Activated CD4-positive, alpha-beta memory T cell treated with anti-CD3 and anti-CD28 coated beads, Interleukin-2, amount 10 ng/mL, durations not matched to agents 7 days and 5 days (primary cell): ENCODE measurements at regions of chr13 and their contacts with region 1.

Region 1: DNA sequence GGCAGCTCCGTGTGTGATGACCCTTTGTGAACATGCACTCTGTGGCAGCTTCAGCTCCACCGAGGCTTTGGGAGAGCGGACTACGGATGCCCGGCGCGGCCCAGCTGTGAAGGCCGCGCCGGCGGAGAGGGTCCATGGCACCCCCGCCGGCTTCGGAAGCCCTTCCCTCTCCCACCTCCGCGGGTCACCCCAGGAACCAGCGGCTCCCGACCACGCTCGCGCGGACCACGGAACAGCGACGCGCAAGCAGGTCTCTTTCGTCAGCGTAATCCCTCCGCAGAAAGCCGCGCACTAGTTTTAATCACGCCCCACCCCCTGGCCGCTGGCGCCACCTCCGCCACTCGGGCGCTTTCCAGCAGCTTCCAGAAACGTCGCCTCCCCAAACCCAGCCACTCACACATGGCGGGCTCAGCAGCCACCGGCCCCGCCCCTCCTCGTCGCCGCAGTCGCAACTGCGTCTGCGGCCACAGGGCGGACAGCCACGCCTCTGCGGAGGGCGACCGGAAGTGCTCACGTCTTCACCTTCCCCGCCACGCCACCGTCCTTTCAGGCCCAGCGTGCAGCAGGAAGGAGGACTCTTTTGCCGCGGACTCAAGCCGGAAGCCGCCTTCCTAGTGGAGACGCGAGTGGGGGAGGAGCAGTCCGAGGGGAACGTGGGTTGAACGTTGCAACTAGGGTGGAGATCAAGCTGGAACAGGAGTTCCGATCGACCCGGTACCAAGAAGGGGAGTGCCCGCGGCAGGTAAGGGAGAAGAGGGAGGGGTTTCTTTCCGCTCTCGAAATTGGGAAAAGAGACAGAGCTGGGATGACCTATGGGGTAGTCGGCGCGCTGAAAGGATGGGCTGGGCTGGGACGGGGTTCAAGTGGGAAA is at the start of gene USPL1:
- DNase-seq: peak; percentile 99
- H3K4me3 Mint-ChIP-seq: no peak within 1 kb of the TSS
- H3K27ac Mint-ChIP-seq: no peak within 1 kb of the TSS
- H3K4me1 Mint-ChIP-seq: peaks cover 23% of the 10 kb centered on the region
- H3K27me3 Mint-ChIP-seq: no peaks in the 10 kb centered on the region
- total RNA-seq, gene USPL1: 19.7 to 21.8 TPM

Region 2: GRCh38 chr13:30017880-30018279 is 599.7 kb before region 1 on chr13:
- CTCF ChIA-PET with region 1: no interaction called
- POLR2A ChIA-PET with region 1: no interaction called
- DNase-seq: no peak
- H3K4me3 Mint-ChIP-seq: no peak overlapping the region
- H3K27ac Mint-ChIP-seq: no peak overlapping the region
- H3K4me1 Mint-ChIP-seq: no peaks in the 10 kb centered on the region
- H3K27me3 Mint-ChIP-seq: peaks cover 12% of the 10 kb centered on the region

Region 3: GRCh38 chr13:30142486-30143211 is 474.9 kb before region 1 on chr13:
- CTCF ChIA-PET with region 1: no interaction called
- POLR2A ChIA-PET with region 1: interaction called, 16 read pairs
- DNase-seq: peak; percentile 53
- H3K4me3 Mint-ChIP-seq: no peak overlapping the region
- H3K27ac Mint-ChIP-seq: peak overlapping the region; percentile 71
- H3K4me1 Mint-ChIP-seq: peaks cover 62% of the 10 kb centered on the region
- H3K27me3 Mint-ChIP-seq: no peaks in the 10 kb centered on the region

Region 4: GRCh38 chr13:30346153-30346788 is 271.3 kb before region 1 on chr13:
- CTCF ChIA-PET with region 1: no interaction called
- POLR2A ChIA-PET with region 1: interaction called, 10 read pairs
- DNase-seq: peak; percentile 91
- H3K4me3 Mint-ChIP-seq: peak overlapping the region; percentile 38
- H3K27ac Mint-ChIP-seq: peak overlapping the region; percentile 60
- H3K4me1 Mint-ChIP-seq: peaks cover 37% of the 10 kb centered on the region
- H3K27me3 Mint-ChIP-seq: no peaks in the 10 kb centered on the region

Region 5: GRCh38 chr13:30395192-30396084 is 222.1 kb before region 1 on chr13:
- CTCF ChIA-PET with region 1: no interaction called
- POLR2A ChIA-PET with region 1: interaction called, 24 read pairs
- DNase-seq: peak; percentile 84
- H3K4me3 Mint-ChIP-seq: peak overlapping the region; percentile 83
- H3K27ac Mint-ChIP-seq: peak overlapping the region; percentile 98
- H3K4me1 Mint-ChIP-seq: peaks cover 26% of the 10 kb centered on the region
- H3K27me3 Mint-ChIP-seq: no peaks in the 10 kb centered on the region

Region 6: GRCh38 chr13:30629527-30629926 is 12.0 kb after region 1 on chr13:
- CTCF ChIA-PET with region 1: interaction called, 4 read pairs
- POLR2A ChIA-PET with region 1: interaction called, 69 read pairs
- DNase-seq: no peak
- H3K4me3 Mint-ChIP-seq: no peak overlapping the region
- H3K27ac Mint-ChIP-seq: no peak overlapping the region
- H3K4me1 Mint-ChIP-seq: peaks cover 36% of the 10 kb centered on the region
- H3K27me3 Mint-ChIP-seq: no peaks in the 10 kb centered on the region

Region 7: DNA sequence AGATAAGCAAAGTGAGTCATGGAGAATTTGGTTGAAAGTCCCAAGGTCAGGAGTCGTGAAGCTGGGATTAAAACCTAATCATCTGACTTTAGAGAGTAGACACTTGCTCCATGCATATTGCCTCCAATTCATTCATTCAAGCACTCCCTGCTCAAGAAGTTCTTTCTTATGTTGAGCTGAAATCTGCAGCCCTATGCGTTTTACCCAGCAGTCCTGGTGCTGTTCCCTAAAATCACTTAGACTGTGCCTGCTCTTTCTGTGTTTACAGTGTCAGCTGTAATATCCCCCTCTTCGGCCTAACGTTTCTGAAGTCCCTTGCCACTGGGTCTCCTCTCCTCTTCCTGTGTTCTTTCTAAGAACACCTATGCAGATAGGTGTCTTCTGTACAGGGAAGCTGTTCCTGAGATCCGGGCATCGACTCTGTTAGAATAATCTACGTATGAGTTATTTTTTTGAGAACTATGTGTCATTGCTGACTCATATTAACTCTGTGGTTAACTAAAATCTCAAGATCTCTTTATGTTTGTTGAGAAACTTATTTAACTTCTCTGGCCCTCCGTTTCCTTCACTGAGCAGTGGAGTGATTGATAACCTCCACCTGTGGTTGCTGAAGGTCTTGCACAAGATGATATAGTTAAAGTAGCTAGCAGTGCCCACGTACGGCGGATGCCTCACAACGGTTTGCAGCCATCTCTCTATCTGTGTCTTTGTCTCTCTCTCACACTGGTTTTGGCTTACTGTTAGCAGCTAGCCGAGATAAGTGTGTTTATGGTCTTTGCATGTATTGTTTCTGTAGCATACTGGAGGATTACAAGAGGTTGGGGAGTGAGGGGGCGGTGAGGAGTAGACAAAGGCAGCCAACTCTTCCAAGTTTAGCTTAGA is 122.5 kb after region 1 on chr13:
- CTCF ChIA-PET with region 1: interaction called, 3 read pairs
- POLR2A ChIA-PET with region 1: interaction called, 65 read pairs
- DNase-seq: peak; percentile 79
- H3K4me3 Mint-ChIP-seq: peak overlapping the region; percentile 77
- H3K27ac Mint-ChIP-seq: peak overlapping the region; percentile 97
- H3K4me1 Mint-ChIP-seq: peaks cover 79% of the 10 kb centered on the region
- H3K27me3 Mint-ChIP-seq: no peaks in the 10 kb centered on the region

Region 8: DNA sequence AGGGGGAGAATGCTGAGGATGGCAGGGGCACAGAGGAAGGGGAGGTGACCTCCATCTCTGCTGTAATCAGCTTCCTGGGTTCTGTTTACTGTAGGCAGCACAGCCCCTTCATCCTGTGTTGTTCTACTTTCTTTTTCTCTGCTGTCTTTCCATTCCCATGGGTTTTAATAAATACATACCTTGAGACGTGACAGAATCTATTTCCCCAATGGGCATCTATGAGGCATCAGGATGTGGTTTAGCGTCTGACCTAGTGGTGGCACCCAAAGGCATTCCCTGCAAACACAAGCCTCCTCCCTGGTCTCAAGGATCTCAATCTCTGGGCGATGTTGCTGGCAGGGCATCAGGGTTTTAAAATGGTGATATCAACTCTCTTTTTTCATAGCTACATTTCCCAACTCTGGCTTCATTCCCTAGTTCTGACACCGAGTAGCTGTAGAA is 178.6 kb after region 1 on chr13:
- CTCF ChIA-PET with region 1: interaction called, 5 read pairs
- POLR2A ChIA-PET with region 1: interaction called, 31 read pairs
- DNase-seq: peak; percentile 33
- H3K4me3 Mint-ChIP-seq: peak overlapping the region; percentile 42
- H3K27ac Mint-ChIP-seq: peak overlapping the region; percentile 73
- H3K4me1 Mint-ChIP-seq: peaks cover 36% of the 10 kb centered on the region
- H3K27me3 Mint-ChIP-seq: no peaks in the 10 kb centered on the region